WTC11 (cell line): ENCODE measurements at regions of chr17 and their contacts with region 1.

Region 1: DNA sequence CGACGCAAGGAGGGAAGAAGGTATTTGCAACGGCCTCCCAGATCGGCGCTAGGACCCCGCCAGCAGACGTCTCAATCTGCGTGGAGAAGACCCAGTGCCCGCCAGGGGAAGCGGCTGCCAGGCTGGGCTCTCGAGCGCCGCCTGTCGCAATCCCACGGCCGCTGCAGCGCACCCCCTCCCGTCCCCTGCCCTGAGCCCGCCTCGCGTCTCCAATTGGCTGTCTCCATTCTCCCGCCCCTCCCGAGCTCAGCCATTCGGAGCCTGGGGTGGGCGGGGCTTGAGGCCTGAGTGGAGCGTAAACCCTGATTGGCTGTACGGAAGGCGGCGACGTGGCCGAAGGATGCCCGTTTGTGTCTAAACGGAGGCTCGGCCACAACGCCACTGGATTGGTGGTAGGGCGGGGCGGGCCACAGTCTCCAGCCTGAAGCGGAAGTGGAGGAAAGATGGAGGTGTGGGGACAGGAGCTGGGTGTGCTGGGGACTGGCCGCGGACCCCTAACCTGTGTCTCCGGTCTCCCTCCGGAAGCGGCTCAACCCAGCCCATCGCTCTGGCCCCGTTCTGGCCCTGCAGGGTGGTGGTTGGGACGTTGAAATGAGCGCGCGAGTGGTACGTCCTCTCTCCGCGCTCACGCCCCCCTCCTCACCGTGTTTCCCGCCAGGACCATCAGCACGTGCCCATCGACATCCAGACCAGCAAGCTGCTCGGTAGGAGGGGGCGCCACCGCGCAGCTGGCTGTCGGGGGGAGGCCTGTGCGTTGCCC is at the start of gene CDK5RAP3:
- DNase-seq: peak; percentile 100
- ATAC-seq: peak; percentile 98
- H3K4me3 Mint-ChIP-seq: peak within 1 kb of the TSS; percentile 82
- H3K27ac Mint-ChIP-seq: peak within 1 kb of the TSS; percentile 94
- H3K4me1 Mint-ChIP-seq: peaks cover 14% of the 10 kb centered on the region
- H3K27me3 Mint-ChIP-seq: peaks cover 16% of the 10 kb centered on the region
- CTCF ChIP-seq: peak; percentile 74
- total RNA-seq, gene CDK5RAP3: 128 to 143 TPM (median 138 TPM) in 3 replicates

Region 2: DNA sequence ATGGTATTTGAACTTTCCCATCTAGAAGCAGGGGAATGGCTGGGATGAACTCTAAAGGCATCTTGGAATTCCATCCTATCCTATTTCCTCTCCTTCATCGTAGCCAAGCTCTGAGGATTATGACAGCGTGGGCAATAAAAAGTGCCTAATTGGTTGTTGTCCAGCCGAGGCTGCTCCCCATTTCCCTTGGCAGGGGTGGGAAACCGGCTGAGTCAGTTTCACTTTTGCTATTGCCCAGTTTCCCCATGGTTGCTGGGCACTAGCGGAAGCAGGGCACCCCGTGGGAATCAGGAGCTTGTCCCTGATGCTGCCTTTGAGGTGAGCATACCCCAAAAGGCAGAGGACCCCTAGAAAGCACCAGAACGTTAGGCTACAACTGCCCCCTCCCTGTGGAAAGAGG is 88.6 kb before region 1 on chr17:
- CTCF ChIA-PET with region 1: interaction called, 11 read pairs
- POLR2A ChIA-PET with region 1: no interaction called
- DNase-seq: no peak
- ATAC-seq: no peak
- H3K4me3 Mint-ChIP-seq: no peak overlapping the region
- H3K27ac Mint-ChIP-seq: no peak overlapping the region
- H3K4me1 Mint-ChIP-seq: peaks cover 32% of the 10 kb centered on the region
- H3K27me3 Mint-ChIP-seq: peaks cover 14% of the 10 kb centered on the region
- CTCF ChIP-seq: no peak

Region 3: DNA sequence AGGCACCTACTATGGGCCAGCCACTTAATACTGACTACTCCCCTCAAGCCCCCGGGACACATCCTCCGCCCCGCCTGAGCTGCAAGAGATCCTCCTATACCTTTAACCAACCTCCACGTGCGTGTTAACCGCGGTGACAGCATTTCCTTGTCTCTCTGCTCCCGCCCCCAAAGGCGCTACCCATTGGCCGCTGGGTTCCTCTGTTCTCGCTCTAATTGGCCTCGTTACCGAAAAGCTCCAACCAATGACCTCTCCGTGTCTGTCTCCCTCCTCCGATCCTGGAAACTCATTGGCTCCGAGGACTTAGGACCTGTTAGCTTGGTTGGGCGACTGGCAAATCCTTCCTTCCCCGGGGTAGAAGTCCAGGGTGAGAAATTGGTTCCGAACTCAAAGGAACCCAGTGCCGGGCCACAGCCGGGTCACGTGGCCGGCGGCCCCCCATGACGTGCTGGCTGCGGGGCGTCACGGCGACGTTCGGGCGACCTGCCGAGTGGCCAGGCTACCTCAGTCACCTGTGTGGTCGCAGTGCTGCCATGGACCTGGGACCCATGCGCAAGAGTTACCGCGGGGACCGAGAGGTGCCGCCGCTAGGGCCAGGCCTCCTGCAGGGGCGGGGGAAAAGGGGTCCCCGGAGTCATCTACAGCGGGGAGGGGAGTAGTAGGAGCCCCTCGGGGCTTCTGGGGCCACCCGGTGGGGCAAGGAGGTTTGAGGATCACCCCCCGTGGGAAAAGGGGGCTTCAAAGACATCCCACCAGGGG is 29.5 kb before region 1 on chr17 and contains the start of gene PNPO:
- CTCF ChIA-PET with region 1: interaction called, 104 read pairs
- POLR2A ChIA-PET with region 1: interaction called, 8 read pairs
- DNase-seq: peak; percentile 90
- ATAC-seq: peak; percentile 99
- H3K4me3 Mint-ChIP-seq: peak within 1 kb of the TSS; percentile 80
- H3K27ac Mint-ChIP-seq: no peak within 1 kb of the TSS
- H3K4me1 Mint-ChIP-seq: peaks cover 14% of the 10 kb centered on the region
- H3K27me3 Mint-ChIP-seq: peaks cover 30% of the 10 kb centered on the region
- CTCF ChIP-seq: no peak
- total RNA-seq, gene PNPO: 12.2 to 17.8 TPM (median 17.2 TPM) in 3 replicates

Region 4: DNA sequence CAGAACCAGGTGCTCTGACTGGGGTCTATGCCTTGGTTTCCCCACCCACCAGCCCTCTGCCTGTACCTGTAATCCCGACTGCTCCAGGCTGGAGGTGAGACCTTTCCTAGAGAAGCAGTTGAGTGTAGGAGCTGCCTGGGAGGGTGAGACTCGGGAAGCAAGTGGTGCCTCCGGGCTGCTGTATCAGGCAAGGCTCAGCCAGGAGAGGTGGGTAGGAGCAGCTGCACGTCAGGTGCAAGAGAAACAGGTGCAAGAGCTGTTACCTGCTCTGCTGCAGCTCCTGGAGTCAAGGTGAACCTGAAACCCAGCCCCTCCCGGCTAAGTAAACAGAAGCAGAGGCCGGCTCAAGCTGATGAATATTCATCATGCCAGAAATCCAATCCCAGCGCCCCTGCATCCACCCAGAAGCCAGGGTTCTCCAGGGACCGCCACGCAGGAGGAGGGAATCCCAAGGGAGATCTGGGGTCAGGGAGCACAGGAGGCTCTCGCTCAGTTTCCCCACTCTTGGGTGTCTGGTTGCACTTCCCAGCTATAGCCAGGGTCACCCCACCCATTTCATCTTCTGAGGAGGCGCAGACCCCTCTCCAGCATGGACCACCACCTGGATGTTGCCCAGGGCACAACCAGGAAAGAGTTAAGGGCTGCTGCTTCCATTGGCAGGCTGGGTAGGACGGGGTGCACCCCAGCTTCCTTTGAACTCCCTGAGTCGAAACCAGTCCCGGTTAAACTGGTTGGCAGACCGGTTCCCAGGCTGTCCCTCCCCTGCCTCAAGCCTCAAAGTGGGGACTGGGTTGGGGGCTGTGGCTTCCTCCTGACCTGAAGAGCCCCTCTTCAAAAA is 13.1 kb before region 1 on chr17 and contains the start of gene PRR15L:
- CTCF ChIA-PET with region 1: interaction called, 119 read pairs
- POLR2A ChIA-PET with region 1: interaction called, 10 read pairs
- DNase-seq: peak; percentile 66
- ATAC-seq: peak; percentile 80
- H3K4me3 Mint-ChIP-seq: peak within 1 kb of the TSS; percentile 45
- H3K27ac Mint-ChIP-seq: peak within 1 kb of the TSS; percentile 70
- H3K4me1 Mint-ChIP-seq: peaks cover 29% of the 10 kb centered on the region
- H3K27me3 Mint-ChIP-seq: peaks cover 15% of the 10 kb centered on the region
- CTCF ChIP-seq: no peak
- total RNA-seq, gene PRR15L: 0.59 to 1.1 TPM (median 1.1 TPM) in 3 replicates

Region 5: GRCh38 chr17:47995241-47995935 is 24.5 kb after region 1 on chr17:
- CTCF ChIA-PET with region 1: interaction called, 11 read pairs
- POLR2A ChIA-PET with region 1: interaction called, 3 read pairs
- DNase-seq: peak; percentile 35
- ATAC-seq: peak; percentile 50
- H3K4me3 Mint-ChIP-seq: no peak overlapping the region
- H3K27ac Mint-ChIP-seq: no peak overlapping the region; the same call in 1 of the 2 replicates
- H3K4me1 Mint-ChIP-seq: peaks cover 51% of the 10 kb centered on the region
- H3K27me3 Mint-ChIP-seq: no peaks in the 10 kb centered on the region
- CTCF ChIP-seq: no peak

Region 6: DNA sequence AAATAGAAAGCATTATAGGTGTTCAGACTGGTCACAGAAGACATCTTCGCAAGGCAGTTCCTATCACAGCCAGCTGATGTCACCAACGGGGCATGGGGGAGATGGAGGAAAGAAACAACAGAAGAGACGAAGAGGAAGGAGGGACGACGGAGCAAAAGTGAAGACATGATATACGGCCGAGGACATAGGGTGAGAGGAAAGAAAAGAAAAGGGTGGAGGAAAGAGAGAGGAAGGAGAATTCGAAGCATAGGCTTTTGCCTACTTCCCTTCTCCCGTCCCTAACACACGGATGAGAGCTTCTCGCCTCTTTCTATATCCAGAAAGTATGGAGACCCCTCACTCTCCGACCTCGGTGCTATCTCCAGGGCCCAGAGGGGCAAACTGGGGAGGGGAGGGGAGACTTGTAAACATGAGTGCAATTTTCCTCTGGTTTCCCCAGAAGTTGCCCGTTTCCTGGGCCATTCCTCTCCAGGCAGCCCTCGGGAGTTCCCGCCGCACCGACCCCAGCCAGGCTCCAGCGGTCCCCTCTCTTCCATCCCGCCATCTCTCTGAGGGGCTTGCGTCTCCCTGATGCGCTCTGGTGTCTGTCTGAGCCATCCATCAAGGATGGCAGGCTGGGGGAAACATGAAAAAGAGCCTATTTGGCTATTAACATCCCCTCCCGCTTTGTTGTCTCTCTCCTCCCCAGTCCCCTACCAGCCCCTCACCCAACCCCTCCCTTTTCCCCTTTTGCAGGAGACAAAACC is 40.7 kb after region 1 on chr17:
- CTCF ChIA-PET with region 1: interaction called, 242 read pairs
- POLR2A ChIA-PET with region 1: no interaction called
- DNase-seq: peak; percentile 59
- ATAC-seq: peak; percentile 79
- H3K4me3 Mint-ChIP-seq: peak overlapping the region; percentile 88
- H3K27ac Mint-ChIP-seq: no peak overlapping the region
- H3K4me1 Mint-ChIP-seq: peaks cover 23% of the 10 kb centered on the region
- H3K27me3 Mint-ChIP-seq: peaks cover 26% of the 10 kb centered on the region
- CTCF ChIP-seq: no peak